ENCODE measurements at regions of chr2 and their contacts with region 1.

Region 1: DNA sequence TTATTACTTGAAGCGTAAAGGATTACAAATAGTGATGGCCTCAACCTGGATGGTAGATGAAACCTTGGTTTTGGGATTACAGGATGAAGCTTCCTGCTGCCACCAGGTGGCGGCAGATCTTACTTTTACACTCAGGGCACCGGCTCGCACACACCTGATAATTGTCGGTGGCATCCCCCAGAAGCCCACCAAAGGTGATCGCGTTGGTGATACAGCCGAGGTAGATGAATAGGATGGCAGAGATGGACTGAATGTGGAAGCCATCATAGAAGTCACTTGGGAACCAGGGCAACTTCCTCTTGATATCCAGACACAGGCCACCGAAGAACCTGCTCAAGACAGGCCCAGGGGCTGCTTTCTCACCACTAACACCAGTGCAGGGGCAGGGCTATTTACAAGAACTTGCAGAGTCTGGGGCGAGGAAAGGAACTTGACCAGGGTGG is 51.8 kb downstream of the MTHFD2 start:
- DNase-seq: peak; percentile 82
- CTCF ChIP-seq: peak; percentile 86

Region 2: GRCh38 chr2:73828818-73829570 is 421.2 kb before region 1 on chr2 and contains the start of gene STAMBP:
- CTCF ChIA-PET with region 1: interaction called, 14 read pairs
- POLR2A ChIA-PET with region 1: no interaction called
- DNase-seq: peak; percentile 94
- CTCF ChIP-seq: no peak

Region 3: DNA sequence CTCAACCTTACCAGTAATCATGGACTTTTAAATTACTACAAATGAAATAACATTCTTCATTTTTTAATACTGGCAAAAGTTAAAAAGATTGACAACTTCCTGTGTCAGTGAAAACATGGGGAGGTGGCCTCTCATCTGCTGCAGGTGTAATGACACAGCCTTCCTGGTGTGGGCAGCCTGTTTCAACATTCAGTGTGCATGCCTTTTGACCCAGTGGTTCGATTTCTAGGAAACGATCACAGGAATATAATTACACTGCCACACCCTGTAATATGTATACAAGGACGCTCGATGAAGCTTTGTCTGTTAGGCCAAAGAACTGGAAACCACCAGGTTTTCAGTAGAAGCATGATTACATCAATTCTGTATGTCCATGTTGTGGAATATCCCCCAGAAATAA is 16.9 kb after region 1 on chr2:
- CTCF ChIA-PET with region 1: interaction called, 15 read pairs
- POLR2A ChIA-PET with region 1: no interaction called
- DNase-seq: peak; percentile 70
- CTCF ChIP-seq: peak; percentile 28

Region 4: DNA sequence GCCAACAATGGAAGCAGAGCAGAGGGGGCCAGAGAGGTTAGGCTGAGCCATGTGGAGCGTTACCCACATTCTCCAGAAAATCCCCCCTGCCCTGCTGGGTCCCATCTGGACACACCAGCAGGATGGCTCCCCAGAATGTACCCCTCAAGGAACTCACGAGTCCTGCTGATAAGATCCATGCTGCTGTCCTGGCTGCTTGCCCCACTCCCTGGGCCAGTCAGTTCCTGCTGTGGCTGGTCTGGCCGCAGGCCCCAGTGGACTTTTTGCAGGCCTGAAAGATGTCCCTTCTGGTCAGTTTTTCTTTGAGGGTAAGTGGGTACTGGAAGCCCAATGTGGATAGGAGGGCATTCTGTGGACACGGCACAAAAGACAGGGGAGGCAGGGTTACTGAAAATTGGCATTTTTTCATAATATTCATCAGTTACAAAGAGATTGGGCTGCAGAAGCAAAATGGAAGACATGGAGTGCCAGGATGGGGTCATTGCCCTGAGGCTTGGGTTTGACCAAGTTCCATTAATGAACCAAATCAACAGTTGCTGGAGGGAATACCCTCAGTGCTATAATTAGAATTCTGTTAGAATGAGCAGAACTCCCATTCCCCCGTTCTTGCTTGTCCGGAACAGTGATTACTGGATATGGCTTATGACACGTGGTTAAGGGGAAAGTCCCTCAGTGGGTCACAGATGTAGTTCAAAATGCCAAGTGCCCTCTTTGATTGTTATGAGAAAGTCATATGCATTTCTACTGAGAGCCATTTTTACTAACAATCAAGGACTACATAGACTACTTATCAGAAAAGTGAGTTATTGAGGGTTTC is 54.3 kb after region 1 on chr2:
- CTCF ChIA-PET with region 1: interaction called, 10 read pairs
- POLR2A ChIA-PET with region 1: no interaction called
- DNase-seq: peak; percentile 30
- CTCF ChIP-seq: no peak

Region 5: GRCh38 chr2:74391580-74392448 is 141.6 kb after region 1 on chr2:
- CTCF ChIA-PET with region 1: interaction called, 11 read pairs
- POLR2A ChIA-PET with region 1: no interaction called
- DNase-seq: peak; percentile 94
- CTCF ChIP-seq: peak; percentile 95